Activated CD8-positive, alpha-beta T cell treated with anti-CD3 and anti-CD28 coated beads, Interleukin-2, amount 10 ng/mL, durations not matched to agents 7 days and 5 days (primary cell): ENCODE measurements at regions of chr7 and their contacts with region 1.

Region 1: GRCh38 chr7:3154912-3155494 is 111.3 kb upstream of the CARD11 start:
- DNase-seq: peak; percentile 80
- ATAC-seq: no peak
- H3K4me3 Mint-ChIP-seq: no peak overlapping the region
- H3K27ac Mint-ChIP-seq: peak overlapping the region; percentile 24
- H3K4me1 Mint-ChIP-seq: peaks cover 26% of the 10 kb centered on the region
- H3K27me3 Mint-ChIP-seq: peaks cover 9% of the 10 kb centered on the region

Region 2: GRCh38 chr7:2863461-2864066 is 291.4 kb before region 1 on chr7:
- CTCF ChIA-PET with region 1: interaction called, 14 read pairs
- POLR2A ChIA-PET with region 1: no interaction called
- DNase-seq: peak; percentile 90
- ATAC-seq: peak; percentile 91
- H3K4me3 Mint-ChIP-seq: peak overlapping the region; percentile 64
- H3K27ac Mint-ChIP-seq: peak overlapping the region; percentile 86
- H3K4me1 Mint-ChIP-seq: peaks cover 28% of the 10 kb centered on the region
- H3K27me3 Mint-ChIP-seq: peaks cover 12% of the 10 kb centered on the region

Region 3: GRCh38 chr7:2886900-2887299 is 268.1 kb before region 1 on chr7:
- CTCF ChIA-PET with region 1: interaction called, 16 read pairs
- POLR2A ChIA-PET with region 1: no interaction called
- DNase-seq: peak; percentile 68
- ATAC-seq: peak; percentile 73
- H3K4me3 Mint-ChIP-seq: no peak overlapping the region
- H3K27ac Mint-ChIP-seq: no peak overlapping the region
- H3K4me1 Mint-ChIP-seq: peaks cover 7% of the 10 kb centered on the region
- H3K27me3 Mint-ChIP-seq: peaks cover 2% of the 10 kb centered on the region

Region 4: GRCh38 chr7:2894118-2894940 is 260.7 kb before region 1 on chr7:
- CTCF ChIA-PET with region 1: interaction called, 21 read pairs
- POLR2A ChIA-PET with region 1: no interaction called
- DNase-seq: peak; percentile 65
- ATAC-seq: peak; percentile 81
- H3K4me3 Mint-ChIP-seq: peak overlapping the region; percentile 78
- H3K27ac Mint-ChIP-seq: peak overlapping the region; percentile 96
- H3K4me1 Mint-ChIP-seq: peaks cover 29% of the 10 kb centered on the region
- H3K27me3 Mint-ChIP-seq: no peaks in the 10 kb centered on the region

Region 5: GRCh38 chr7:3042861-3043489 is 112.0 kb before region 1 on chr7:
- CTCF ChIA-PET with region 1: interaction called, 14 read pairs
- POLR2A ChIA-PET with region 1: no interaction called
- DNase-seq: peak; percentile 87
- ATAC-seq: peak; percentile 85
- H3K4me3 Mint-ChIP-seq: peak overlapping the region; percentile 98
- H3K27ac Mint-ChIP-seq: peak overlapping the region; percentile 94
- H3K4me1 Mint-ChIP-seq: peaks cover 61% of the 10 kb centered on the region
- H3K27me3 Mint-ChIP-seq: no peaks in the 10 kb centered on the region

Region 6: GRCh38 chr7:3092468-3092867 is 62.5 kb before region 1 on chr7:
- CTCF ChIA-PET with region 1: interaction called, 26 read pairs
- POLR2A ChIA-PET with region 1: no interaction called
- DNase-seq: peak; percentile 90
- ATAC-seq: peak; percentile 75
- H3K4me3 Mint-ChIP-seq: peak overlapping the region; percentile 57
- H3K27ac Mint-ChIP-seq: peak overlapping the region; percentile 98
- H3K4me1 Mint-ChIP-seq: peaks cover 79% of the 10 kb centered on the region
- H3K27me3 Mint-ChIP-seq: no peaks in the 10 kb centered on the region

Region 7: DNA sequence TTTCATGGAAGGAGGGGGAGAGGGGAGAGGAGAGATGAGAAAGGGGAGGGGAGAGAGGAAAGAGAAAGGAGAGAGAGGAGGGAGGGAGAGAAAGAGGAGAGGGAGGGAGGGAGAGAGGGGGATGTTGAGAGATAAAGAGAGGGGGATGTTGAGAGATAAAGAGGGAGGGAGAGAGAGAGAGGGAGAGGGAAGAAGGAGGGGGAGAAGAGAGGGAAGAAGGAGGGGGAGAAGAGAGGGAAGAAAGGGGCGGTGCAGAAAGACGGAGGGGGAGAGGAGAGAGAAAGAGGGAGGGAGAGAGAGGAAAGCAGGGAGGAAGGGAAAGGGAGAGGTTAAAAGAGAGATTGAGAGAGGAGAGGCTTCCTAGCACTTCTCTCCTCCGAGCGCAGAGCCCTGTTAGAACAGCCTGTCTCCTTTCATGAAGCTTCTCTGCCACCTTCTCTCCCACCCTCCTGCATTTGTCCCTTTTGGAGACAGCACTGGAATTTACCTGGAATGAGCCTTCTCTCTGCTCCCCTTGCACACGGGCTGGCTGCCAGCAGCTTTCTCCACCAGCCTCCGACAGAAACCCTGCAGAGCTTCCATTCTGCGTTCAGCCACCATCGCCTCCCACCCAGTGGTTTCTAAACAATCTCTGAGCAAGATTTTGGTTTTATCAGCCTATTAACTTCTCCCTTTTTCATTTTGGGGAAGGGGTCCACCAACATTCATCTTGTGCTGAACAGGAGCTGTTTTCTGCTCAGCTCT is 37.3 kb before region 1 on chr7:
- CTCF ChIA-PET with region 1: interaction called, 11 read pairs
- POLR2A ChIA-PET with region 1: no interaction called
- DNase-seq: peak; percentile 69
- ATAC-seq: peak; percentile 64
- H3K4me3 Mint-ChIP-seq: peak overlapping the region; percentile 85
- H3K27ac Mint-ChIP-seq: peak overlapping the region; percentile 95
- H3K4me1 Mint-ChIP-seq: peaks cover 88% of the 10 kb centered on the region
- H3K27me3 Mint-ChIP-seq: no peaks in the 10 kb centered on the region